ENCODE measurements at regions of chr2 and their contacts with region 1.

Region 1: GRCh38 chr2:233832869-233833311 is 21.4 kb downstream of the HJURP start:
- DNase-seq: peak; percentile 63
- H3K4me3 ChIP-seq: no peak overlapping the region
- H3K27ac ChIP-seq: no peak overlapping the region
- H3K4me1 ChIP-seq: peaks cover 18% of the 10 kb centered on the region
- H3K27me3 ChIP-seq: no peaks in the 10 kb centered on the region
- CTCF ChIP-seq: peak; percentile 12 to 53

Region 2: GRCh38 chr2:233404222-233404621 is 428.7 kb before region 1 on chr2:
- CTCF ChIA-PET with region 1: interaction called, 3 read pairs
- dilution Hi-C with region 1: no loop called
- in situ Hi-C with region 1: no loop called
- intact Hi-C with region 1: loop called (anchors 1 kb)
- DNase-seq: peak; percentile 46
- H3K4me3 ChIP-seq: no peak overlapping the region
- H3K27ac ChIP-seq: no peak overlapping the region
- H3K4me1 ChIP-seq: no peaks in the 10 kb centered on the region
- H3K27me3 ChIP-seq: no peaks in the 10 kb centered on the region
- CTCF ChIP-seq: peak; percentile 94 to 95

Region 3: GRCh38 chr2:233449081-233449901 is 383.6 kb before region 1 on chr2:
- CTCF ChIA-PET with region 1: interaction called, 10 read pairs
- dilution Hi-C with region 1: no loop called
- in situ Hi-C with region 1: no loop called
- intact Hi-C with region 1: loop called (anchors 1 kb)
- DNase-seq: no peak
- H3K4me3 ChIP-seq: no peak overlapping the region
- H3K27ac ChIP-seq: no peak overlapping the region
- H3K4me1 ChIP-seq: no peaks in the 10 kb centered on the region
- H3K27me3 ChIP-seq: no peaks in the 10 kb centered on the region
- CTCF ChIP-seq: peak; percentile 48 to 72

Region 4: DNA sequence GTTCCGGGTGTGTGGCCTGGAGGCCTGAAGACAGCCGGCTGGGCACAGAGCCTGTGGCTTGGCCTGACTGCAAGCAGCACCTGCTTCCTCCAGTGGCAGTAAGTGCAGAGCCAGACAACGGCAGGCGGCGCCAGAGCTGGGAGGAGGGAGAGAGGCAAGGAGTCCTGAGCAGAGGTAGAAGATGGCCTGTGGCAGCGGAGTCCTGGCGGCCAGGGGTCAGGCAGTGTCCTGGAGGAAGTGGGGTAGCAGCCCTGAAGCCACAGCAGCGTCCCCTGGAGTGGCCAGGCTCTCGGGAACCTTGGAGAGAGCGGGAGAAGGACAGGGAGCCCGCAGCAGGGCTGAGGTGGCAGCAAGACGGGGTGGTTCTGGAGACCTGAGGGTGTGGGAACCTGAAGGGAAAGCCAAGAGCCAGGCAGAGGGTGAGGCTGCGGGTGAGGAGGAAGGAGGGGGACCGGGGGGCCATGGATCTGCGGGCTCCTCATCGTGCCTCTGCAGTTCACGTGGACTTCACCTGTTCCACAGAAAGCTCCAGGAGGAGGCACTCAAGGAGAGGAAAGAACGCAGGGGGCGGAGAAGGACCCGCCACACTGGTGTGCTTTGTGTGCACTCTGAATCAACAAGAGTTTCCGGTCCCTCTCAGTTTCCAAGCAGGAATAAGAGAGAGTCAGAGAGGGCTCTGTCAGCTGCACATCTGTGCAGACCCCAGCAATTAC is 352.2 kb before region 1 on chr2:
- CTCF ChIA-PET with region 1: interaction called, 3 read pairs
- dilution Hi-C with region 1: no loop called
- in situ Hi-C with region 1: no loop called
- intact Hi-C with region 1: loop called (anchors 2 kb)
- DNase-seq: no peak
- H3K4me3 ChIP-seq: no peak overlapping the region
- H3K27ac ChIP-seq: no peak overlapping the region
- H3K4me1 ChIP-seq: peaks cover 13% of the 10 kb centered on the region
- H3K27me3 ChIP-seq: no peaks in the 10 kb centered on the region
- CTCF ChIP-seq: peak; percentile 12 to 39

Region 5: DNA sequence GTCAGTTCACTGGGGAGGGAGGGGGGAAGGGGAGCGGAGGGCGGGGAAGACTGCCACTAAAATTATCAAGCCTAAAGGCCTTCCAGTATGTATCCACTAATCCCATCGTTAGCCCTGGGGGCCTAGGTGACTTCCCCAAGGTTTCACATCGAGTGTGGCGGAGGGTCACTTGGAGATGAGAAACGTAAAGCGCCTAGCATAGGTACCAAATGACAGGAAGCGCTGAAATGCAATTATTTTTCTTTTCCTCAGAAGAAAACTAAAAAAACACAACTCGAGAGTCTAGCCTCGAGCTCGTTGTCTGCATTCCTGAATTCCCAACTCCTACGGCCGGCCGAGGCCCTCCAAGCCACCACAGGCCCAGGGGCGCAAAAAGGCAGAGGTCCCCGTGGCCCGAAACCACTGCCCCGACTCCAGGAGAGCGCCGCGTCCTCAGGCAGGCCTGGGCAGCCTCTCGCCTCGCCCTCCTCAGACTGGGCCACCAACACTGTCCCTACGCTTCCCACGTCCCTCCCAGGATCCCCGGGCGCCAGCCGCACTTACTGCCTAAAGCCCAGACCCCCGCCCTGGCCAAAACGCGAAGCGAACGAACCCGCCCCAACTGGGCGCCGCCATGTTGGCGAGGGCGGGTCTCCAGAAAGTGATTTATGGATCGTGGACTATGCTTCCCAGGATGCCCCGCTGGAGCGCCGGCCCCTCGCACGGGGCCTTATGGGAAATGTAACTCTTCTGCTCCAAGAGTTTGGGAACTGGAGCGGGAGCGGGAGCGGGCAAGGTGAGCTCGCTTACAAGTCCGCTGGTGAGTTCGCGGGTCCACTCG is 266.5 kb before region 1 on chr2 and contains the start of gene USP40:
- CTCF ChIA-PET with region 1: no interaction called
- dilution Hi-C with region 1: no loop called
- in situ Hi-C with region 1: no loop called
- intact Hi-C with region 1: loop called (anchors 5 kb)
- DNase-seq: peak; percentile 87
- H3K4me3 ChIP-seq: peak within 1 kb of the TSS; percentile 88 to 99 (median 91)
- H3K27ac ChIP-seq: peak within 1 kb of the TSS; percentile 94
- H3K4me1 ChIP-seq: peaks cover 7% of the 10 kb centered on the region
- H3K27me3 ChIP-seq: no peaks in the 10 kb centered on the region
- CTCF ChIP-seq: no peak
- total RNA-seq, gene USP40: 36.0 to 64.9 TPM

Region 6: GRCh38 chr2:234111523-234111922 is 278.6 kb after region 1 on chr2:
- CTCF ChIA-PET with region 1: no interaction called
- dilution Hi-C with region 1: no loop called
- in situ Hi-C with region 1: no loop called
- intact Hi-C with region 1: no loop called
- DNase-seq: peak; percentile 96
- H3K4me3 ChIP-seq: no peak overlapping the region
- H3K27ac ChIP-seq: peak overlapping the region; percentile 30
- H3K4me1 ChIP-seq: peaks cover 32% of the 10 kb centered on the region
- H3K27me3 ChIP-seq: no peaks in the 10 kb centered on the region
- CTCF ChIP-seq: no peak

Measured in mammary epithelial cell (primary cell).